PC-3 (cell line): ENCODE measurements at regions of chr3 and their contacts with region 1.

Region 1: GRCh38 chr3:50600841-50601591 is 10.6 kb downstream of the CISH start:
- DNase-seq: peak; percentile 92
- ATAC-seq: peak; percentile 86
- H3K4me3 ChIP-seq: peak overlapping the region; percentile 36; the same call in 1 of the 2 replicates
- H3K27ac ChIP-seq: peak overlapping the region; percentile 36
- H3K4me1 ChIP-seq: peaks cover 27% of the 10 kb centered on the region
- H3K27me3 ChIP-seq: no peaks in the 10 kb centered on the region
- CTCF ChIP-seq: no peak

Region 2: DNA sequence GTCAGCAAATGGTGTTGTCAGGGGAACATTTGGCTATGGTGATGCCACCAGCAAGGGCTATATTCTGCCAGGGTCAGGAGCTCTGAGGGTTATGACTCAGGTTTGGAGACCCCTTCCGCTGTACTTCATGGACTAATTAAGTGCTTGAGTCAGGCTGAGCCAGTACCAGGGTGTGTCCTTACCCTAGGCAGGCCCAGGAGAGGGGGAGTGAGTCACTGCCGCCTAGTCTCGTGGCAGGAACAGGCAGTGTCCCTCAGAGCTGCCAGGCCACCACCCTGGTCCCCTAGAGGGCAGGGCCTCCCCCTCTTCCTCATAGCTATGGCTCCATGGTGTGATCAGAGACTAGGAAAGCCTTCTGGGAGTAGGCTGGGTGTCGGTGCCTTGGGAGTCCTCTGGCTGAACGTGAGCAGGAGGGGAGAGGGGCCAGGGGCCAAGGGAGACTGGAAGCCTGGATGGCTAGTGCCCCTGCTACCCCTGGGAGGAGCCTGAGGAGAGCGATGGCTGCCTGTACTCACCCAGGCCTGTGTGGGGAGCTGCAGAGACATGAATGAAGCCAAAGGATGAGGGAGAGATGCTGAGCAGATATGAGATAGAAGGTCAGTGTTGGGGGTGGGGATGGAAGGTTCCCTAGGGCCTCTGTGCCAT is 26.5 kb after region 1 on chr3:
- CTCF ChIA-PET with region 1: no interaction called
- POLR2A ChIA-PET with region 1: no interaction called
- intact Hi-C with region 1: no loop called
- DNase-seq: peak; percentile 97
- ATAC-seq: peak; percentile 92
- H3K4me3 ChIP-seq: no peak overlapping the region
- H3K27ac ChIP-seq: peak overlapping the region; percentile 83
- H3K4me1 ChIP-seq: peaks cover 97% of the 10 kb centered on the region
- H3K27me3 ChIP-seq: no peaks in the 10 kb centered on the region
- CTCF ChIP-seq: peak; percentile 64

Region 3: DNA sequence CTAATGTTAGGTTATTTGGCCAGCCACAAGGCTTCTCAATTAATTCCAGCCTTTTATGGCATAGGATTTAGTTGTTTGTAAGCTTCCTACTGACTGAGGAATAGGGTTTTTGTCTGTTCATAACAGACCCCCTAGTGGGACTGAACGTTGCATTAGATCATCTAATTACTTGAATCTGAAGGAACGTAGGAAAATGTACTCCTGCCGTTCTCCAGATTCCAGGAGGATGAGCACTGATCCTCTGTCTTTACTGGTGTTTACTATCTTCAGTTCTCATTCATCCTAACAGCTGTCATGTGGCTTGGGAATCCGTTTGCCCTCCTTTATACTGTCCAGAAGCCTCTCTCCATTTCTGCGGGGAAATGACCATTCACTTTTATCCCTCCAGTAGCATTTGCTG is 990.2 kb after region 1 on chr3:
- CTCF ChIA-PET with region 1: no interaction called
- POLR2A ChIA-PET with region 1: interaction called, 15 read pairs
- intact Hi-C with region 1: no loop called
- DNase-seq: no peak
- ATAC-seq: no peak
- H3K4me3 ChIP-seq: no peak overlapping the region
- H3K27ac ChIP-seq: no peak overlapping the region
- H3K4me1 ChIP-seq: no peaks in the 10 kb centered on the region
- H3K27me3 ChIP-seq: no peaks in the 10 kb centered on the region
- CTCF ChIP-seq: no peak